ENCODE measurements at regions of chr10 and their contacts with region 1.

Region 1: DNA sequence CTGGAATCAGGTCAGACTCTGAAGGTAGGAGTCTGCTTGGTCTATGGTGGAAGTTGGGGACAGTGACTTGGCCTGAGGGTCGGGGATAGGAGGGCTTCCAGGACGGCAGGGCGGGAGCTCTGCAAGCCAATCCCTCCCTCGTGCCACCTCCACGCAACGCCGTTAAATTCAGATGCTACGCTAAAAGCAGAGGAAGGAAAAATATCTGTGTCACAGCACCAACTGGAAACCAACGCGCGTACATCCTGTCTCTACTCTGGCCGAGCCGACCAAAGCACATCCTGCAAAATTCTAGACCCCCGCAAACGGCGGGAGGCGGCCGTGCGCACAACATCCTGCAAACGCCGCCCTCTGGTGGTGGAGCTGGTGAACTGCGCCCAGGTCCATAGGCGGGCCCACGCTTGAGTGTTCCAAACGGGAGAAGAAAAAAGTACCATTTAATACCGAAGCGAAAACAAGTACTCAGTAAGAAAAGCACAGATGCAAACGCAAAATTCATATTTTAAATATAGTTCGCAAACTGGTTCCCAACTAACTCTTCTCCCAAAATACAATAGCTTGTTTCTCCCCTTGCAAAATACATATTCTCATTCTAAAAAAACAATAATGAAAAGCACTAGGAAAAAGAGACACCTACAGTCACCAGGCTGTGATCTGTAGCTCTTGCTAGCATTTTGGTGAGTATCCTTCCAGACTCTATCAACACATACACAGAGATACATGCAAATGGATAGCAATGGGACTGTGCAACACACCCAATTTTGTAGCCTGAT is 45.7 kb upstream of the HSPA12A start:
- DNase-seq: peak; percentile 64
- H3K27ac ChIP-seq: no peak overlapping the region
- CTCF ChIP-seq: peak; percentile 97

Region 2: GRCh38 chr10:115073796-115074195 is 1714.3 kb before region 1 on chr10:
- CTCF ChIA-PET with region 1: no interaction called
- POLR2A ChIA-PET with region 1: no interaction called
- DNase-seq: no peak
- H3K27ac ChIP-seq: no peak overlapping the region
- CTCF ChIP-seq: no peak

Region 3: GRCh38 chr10:116620423-116621400 is 167.4 kb before region 1 on chr10 and contains the start of gene PNLIPRP2:
- CTCF ChIA-PET with region 1: interaction called, 32 read pairs
- POLR2A ChIA-PET with region 1: interaction called, 11 read pairs
- DNase-seq: no peak
- H3K27ac ChIP-seq: no peak within 1 kb of the TSS
- CTCF ChIP-seq: no peak

Region 4: DNA sequence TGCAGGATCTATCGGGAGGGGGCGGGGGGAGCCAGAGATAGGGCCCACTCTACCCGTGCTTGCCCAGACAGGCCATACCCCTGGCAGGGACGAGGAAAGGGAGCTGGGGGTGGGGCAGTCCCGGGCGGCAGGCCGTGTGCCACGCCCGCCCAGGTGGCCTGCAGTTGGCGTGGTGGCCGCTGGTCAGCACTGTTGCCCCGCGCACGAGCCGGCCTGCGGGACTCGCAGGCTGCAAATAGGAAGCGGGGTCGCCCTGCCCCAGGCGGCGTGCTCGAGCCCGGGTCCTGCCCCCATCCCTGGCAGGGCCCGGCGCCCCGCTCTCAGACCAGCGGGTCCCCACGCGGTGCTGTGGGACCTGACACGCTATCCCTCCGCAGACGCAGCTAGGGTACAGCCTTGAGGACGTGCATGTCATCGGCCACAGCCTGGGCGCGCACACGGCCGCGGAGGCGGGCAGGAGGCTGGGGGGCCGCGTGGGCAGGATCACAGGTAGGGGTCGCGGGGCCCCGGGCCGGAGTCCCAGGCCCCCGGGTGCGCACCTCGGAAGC is 160.6 kb before region 1 on chr10:
- CTCF ChIA-PET with region 1: interaction called, 32 read pairs
- POLR2A ChIA-PET with region 1: no interaction called
- DNase-seq: peak; percentile 48
- H3K27ac ChIP-seq: no peak overlapping the region
- CTCF ChIP-seq: no peak; the same call in 1 of the 2 replicates

Region 5: GRCh38 chr10:116688241-116688711 is 99.8 kb before region 1 on chr10:
- CTCF ChIA-PET with region 1: interaction called, 75 read pairs
- POLR2A ChIA-PET with region 1: no interaction called
- DNase-seq: no peak
- H3K27ac ChIP-seq: no peak overlapping the region
- CTCF ChIP-seq: no peak

Region 6: GRCh38 chr10:116742367-116743265 is 45.5 kb before region 1 on chr10 and contains the start of gene HSPA12A:
- CTCF ChIA-PET with region 1: interaction called, 11 read pairs
- POLR2A ChIA-PET with region 1: interaction called, 6 read pairs
- DNase-seq: peak; percentile 86
- H3K27ac ChIP-seq: peak within 1 kb of the TSS; percentile 87
- CTCF ChIP-seq: no peak

Region 7: GRCh38 chr10:116753759-116754158 is 34.3 kb before region 1 on chr10:
- CTCF ChIA-PET with region 1: no interaction called
- POLR2A ChIA-PET with region 1: no interaction called
- DNase-seq: peak; percentile 61
- H3K27ac ChIP-seq: peak overlapping the region; percentile 83
- CTCF ChIP-seq: no peak

Region 8: DNA sequence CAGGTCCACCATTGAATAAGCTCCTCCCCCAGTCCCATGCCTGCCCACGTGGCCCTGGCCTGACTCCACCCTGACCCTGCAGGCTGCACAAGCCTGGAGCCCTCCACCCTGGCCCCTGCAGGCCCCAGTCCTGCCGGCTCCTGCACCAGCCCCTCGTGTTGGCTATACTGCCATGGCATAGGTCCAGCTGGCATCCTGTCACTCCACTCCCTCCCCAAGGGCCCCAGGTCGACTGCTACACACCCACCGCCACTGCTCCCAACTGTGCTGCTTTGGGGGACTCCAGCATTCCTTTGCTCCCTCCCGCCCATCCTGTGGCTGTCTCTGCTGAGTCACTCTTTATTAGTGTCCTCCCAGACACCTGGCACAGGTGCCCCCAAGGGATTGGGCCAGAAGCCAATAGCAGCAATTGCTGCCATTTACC is 13.3 kb before region 1 on chr10:
- CTCF ChIA-PET with region 1: interaction called, 20 read pairs
- POLR2A ChIA-PET with region 1: no interaction called
- DNase-seq: peak; percentile 70
- H3K27ac ChIP-seq: peak overlapping the region; percentile 71
- CTCF ChIP-seq: no peak

Region 9: DNA sequence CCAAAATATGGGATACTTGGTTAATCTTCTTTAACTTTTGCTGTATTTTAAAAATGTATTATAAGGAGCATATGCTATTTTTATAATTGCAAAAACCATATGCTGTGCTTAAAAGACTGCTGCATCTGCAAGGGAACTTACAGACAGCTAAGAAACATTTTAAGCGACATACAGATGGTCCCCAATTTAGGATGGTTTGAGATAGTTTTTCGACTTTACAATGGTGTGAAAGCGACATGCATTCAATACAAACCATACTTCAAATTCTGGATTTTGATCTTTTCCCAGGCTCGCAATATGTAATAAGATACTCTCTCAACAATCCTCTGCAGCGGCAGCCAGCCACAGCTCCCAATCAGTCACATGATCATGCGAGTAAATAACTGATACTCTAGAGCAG is 143.7 kb after region 1 on chr10:
- CTCF ChIA-PET with region 1: no interaction called
- POLR2A ChIA-PET with region 1: no interaction called
- DNase-seq: no peak
- H3K27ac ChIP-seq: no peak overlapping the region
- CTCF ChIP-seq: no peak

Region 10: DNA sequence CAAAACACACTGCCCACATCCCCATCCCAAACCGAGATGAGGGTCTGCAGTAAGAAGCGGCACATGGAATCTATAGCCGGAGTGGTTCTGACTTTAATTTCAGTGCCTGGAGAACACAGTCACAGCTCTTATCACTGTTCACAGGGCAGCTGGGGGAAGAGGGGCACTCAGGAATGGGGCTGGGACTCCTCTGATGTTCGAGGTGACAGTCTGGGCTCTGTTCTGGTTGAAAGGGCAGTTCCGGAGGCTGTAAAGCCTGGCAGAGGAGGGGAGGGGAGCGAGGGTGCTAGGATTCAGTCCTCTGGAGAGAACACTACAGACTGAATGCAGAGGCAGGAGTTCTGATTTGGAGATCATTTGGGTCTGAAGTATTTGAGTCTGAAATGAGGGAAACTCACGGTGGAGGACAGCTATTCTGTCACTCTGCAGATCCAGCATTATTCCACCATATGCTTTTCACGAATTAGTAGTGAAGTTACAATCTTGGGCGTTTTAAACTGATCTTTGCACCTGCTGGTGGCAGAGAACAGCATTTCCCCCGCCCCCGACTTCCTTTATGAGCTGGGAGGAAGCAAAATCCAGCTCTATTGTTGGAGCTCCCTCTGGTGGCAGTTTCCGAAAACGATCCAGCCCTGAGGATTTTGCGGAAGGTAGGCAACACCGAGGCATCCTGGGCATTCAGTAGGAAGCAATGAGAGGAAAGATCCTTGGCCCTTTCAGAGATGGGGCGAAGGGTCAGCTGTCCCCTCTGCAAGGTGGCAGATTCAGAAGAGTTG is 386.5 kb after region 1 on chr10:
- CTCF ChIA-PET with region 1: interaction called, 29 read pairs
- POLR2A ChIA-PET with region 1: no interaction called
- DNase-seq: peak; percentile 93
- H3K27ac ChIP-seq: no peak overlapping the region
- CTCF ChIP-seq: peak; percentile 90

Measured in RWPE1 (cell line).